Sciatic nerve (tissue), 2 donors: ENCODE measurements at regions of chr11 and their contacts with region 1.

Region 1: GRCh38 chr11:86919557-86920210 is 35.5 kb downstream of the FZD4 start:
- DNase-seq: no peak
- ATAC-seq: peak; percentile 76

Region 2: GRCh38 chr11:86869966-86870570 is 49.6 kb before region 1 on chr11:
- intact Hi-C with region 1: loop called (anchors 5 kb)
- DNase-seq: peak; percentile 85
- ATAC-seq: peak; percentile 94